Activated CD4-positive, alpha-beta memory T cell treated with anti-CD3 and anti-CD28 coated beads, Interleukin-2, amount 10 ng/mL, durations not matched to agents 7 days and 5 days (primary cell): ENCODE measurements at regions of chr17 and their contacts with region 1.

Region 1: GRCh38 chr17:58517734-58518609 is 3.5 kb upstream of the MTMR4 start:
- DNase-seq: peak; percentile 100
- H3K4me3 Mint-ChIP-seq: peak overlapping the region; percentile 90
- H3K27ac Mint-ChIP-seq: peak overlapping the region; percentile 97
- H3K4me1 Mint-ChIP-seq: peaks cover 50% of the 10 kb centered on the region
- H3K27me3 Mint-ChIP-seq: no peaks in the 10 kb centered on the region

Region 2: GRCh38 chr17:58337600-58338453 is 180.1 kb before region 1 on chr17:
- CTCF ChIA-PET with region 1: no interaction called
- POLR2A ChIA-PET with region 1: interaction called, 15 read pairs
- DNase-seq: peak; percentile 96
- H3K4me3 Mint-ChIP-seq: peak overlapping the region; percentile 98
- H3K27ac Mint-ChIP-seq: peak overlapping the region; percentile 100
- H3K4me1 Mint-ChIP-seq: peaks cover 52% of the 10 kb centered on the region
- H3K27me3 Mint-ChIP-seq: no peaks in the 10 kb centered on the region

Region 3: GRCh38 chr17:58531661-58532554 is 13.9 kb after region 1 on chr17:
- CTCF ChIA-PET with region 1: interaction called, 18 read pairs
- POLR2A ChIA-PET with region 1: interaction called, 33 read pairs
- DNase-seq: peak; percentile 72
- H3K4me3 Mint-ChIP-seq: peak overlapping the region; percentile 37
- H3K27ac Mint-ChIP-seq: no peak overlapping the region
- H3K4me1 Mint-ChIP-seq: peaks cover 10% of the 10 kb centered on the region
- H3K27me3 Mint-ChIP-seq: peaks cover 50% of the 10 kb centered on the region

Region 4: DNA sequence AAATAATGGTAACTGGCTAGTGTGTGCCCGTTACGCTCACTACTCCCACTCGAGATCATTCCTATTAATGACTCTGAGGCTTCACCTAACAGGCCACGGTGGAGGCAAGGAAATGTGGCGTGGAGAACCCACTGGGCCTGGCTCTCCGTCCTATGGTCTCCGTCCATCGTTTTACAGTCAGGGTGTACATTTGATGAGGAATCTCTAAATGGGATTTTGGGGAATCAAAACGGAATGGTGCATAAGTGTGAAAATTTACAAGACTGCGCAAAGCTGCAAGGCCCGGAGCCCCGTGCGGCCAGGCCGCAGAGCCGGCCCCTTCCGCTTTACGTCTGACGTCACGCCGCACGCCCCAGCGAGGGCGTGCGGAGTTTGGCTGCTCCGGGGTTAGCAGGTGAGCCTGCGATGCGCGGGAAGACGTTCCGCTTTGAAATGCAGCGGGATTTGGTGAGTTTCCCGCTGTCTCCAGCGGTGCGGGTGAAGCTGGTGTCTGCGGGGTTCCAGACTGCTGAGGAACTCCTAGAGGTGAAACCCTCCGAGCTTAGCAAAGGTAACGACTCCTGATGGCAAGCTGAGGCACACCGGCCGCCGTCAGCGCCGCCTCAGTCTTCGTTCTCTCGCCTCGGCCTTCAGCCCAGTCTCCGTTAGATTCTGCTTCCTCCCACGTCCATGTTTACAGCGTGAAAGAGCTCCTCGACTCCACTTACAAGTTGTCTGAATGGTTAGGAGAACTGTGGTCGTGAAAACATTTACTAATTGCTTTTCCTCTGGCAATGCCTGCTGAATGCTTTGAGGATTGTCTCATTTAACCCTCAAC is 174.5 kb after region 1 on chr17 and contains the start of gene RAD51C:
- CTCF ChIA-PET with region 1: interaction called, 13 read pairs
- POLR2A ChIA-PET with region 1: interaction called, 13 read pairs
- DNase-seq: peak; percentile 92
- H3K4me3 Mint-ChIP-seq: peak within 1 kb of the TSS; percentile 90
- H3K27ac Mint-ChIP-seq: peak within 1 kb of the TSS; percentile 88
- H3K4me1 Mint-ChIP-seq: peaks cover 40% of the 10 kb centered on the region
- H3K27me3 Mint-ChIP-seq: no peaks in the 10 kb centered on the region
- total RNA-seq, gene RAD51C: 55.2 to 59.6 TPM